Activated CD4-positive, alpha-beta T cell treated with anti-CD3 and anti-CD28 coated beads, Interleukin-2, amount 10 ng/mL, durations not matched to agents 24 days and 14 days (primary cell): ENCODE measurements at regions of chr3 and their contacts with region 1.

Region 1: GRCh38 chr3:59759298-59760031 is 709.6 kb upstream of the CFAP20DC start:
- DNase-seq: no peak
- H3K4me3 Mint-ChIP-seq: peak overlapping the region; percentile 4
- H3K27ac Mint-ChIP-seq: peak overlapping the region; percentile 56
- H3K4me1 Mint-ChIP-seq: peaks cover 49% of the 10 kb centered on the region
- H3K27me3 Mint-ChIP-seq: no peaks in the 10 kb centered on the region

Region 2: GRCh38 chr3:59771768-59772181 is 12.3 kb after region 1 on chr3:
- intact Hi-C with region 1: loop called (anchors 2 kb)
- DNase-seq: no peak
- H3K4me3 Mint-ChIP-seq: peak overlapping the region; percentile 56
- H3K27ac Mint-ChIP-seq: peak overlapping the region; percentile 67
- H3K4me1 Mint-ChIP-seq: peaks cover 39% of the 10 kb centered on the region
- H3K27me3 Mint-ChIP-seq: no peaks in the 10 kb centered on the region

Region 3: DNA sequence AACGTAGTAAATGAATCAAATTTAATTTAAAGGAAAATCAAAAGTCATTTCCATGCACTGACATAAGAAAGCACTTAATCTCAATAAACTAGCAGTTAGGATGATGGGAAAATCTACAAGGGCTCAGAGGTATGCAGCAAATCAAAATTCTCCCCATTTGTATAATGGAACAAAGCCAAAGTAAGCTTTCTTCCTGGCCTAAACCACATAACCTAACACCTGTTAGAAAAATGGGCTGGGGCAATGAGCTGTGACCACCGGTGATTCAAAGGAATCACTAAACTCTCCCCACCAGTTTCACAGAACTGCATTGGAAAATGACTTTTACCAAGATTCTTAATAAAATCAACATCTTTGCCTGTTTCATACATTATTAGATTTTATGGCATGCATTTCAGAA is 467.4 kb after region 1 on chr3:
- intact Hi-C with region 1: no loop called
- DNase-seq: no peak
- H3K4me3 Mint-ChIP-seq: no peak overlapping the region
- H3K27ac Mint-ChIP-seq: no peak overlapping the region
- H3K4me1 Mint-ChIP-seq: no peaks in the 10 kb centered on the region
- H3K27me3 Mint-ChIP-seq: no peaks in the 10 kb centered on the region